IMR-90 (cell line): ENCODE measurements at regions of chr2 and their contacts with region 1.

Region 1: DNA sequence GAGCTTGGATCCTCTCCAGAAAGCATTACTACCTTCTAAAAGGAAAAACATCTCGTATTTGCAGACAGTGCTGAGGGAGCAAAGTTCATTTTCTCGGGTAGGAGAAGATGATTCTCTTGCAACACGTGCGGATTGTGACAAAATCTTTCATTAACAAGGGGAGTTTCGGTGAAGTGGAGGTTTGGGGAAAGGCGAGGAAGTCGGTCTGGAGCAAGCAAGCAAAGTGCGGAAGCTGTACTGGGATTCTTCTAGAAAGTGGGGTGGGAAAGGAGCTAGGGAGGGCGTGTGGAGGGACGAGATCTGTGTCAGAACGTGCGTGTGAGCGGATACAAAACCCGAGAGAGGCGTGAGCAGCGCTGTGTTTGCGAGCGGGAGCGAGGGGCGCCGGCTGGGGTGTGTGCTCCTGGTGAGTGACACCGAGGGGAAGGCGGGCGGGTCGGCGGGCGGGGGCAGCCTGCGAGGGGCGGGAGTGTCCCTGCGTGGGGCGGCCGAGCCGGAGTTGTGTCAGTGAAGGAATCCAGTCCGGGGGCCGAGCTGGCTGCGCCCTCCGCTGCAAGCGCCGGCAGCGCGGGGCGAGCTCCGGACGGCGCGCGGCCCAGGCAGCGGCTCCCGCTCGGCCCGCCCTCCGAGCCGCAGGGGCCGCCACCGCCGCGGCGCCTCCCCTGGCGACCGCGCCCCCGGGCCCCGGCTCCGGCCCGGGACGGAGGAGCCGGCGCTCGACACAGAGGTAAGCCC is at the start of gene SPATS2L:
- DNase-seq: peak; percentile 86
- ATAC-seq: peak; percentile 78
- H3K4me3 ChIP-seq: peak within 1 kb of the TSS; percentile 53
- H3K27ac ChIP-seq: peak within 1 kb of the TSS; percentile 87
- H3K4me1 ChIP-seq: peaks cover 16% of the 10 kb centered on the region; the same call in 1 of the 2 replicates
- H3K27me3 ChIP-seq: no peaks in the 10 kb centered on the region
- CTCF ChIP-seq: no peak
- POLR2A ChIP-seq: peak; percentile 68; the same call in 1 of the 2 replicates
- RAD21 ChIP-seq: no peak
- total RNA-seq, gene SPATS2L: 118 and 145 TPM in 2 replicates

Region 2: GRCh38 chr2:199979832-199980628 is 326.3 kb before region 1 on chr2:
- CTCF ChIA-PET with region 1: interaction called, 6 read pairs
- POLR2A ChIA-PET with region 1: no interaction called
- dilution Hi-C with region 1: no loop called
- in situ Hi-C with region 1: loop called (anchors 10 kb)
- intact Hi-C with region 1: loop called (anchors 1 kb)
- DNase-seq: peak; percentile 77
- ATAC-seq: peak; percentile 73
- H3K4me3 ChIP-seq: no peak overlapping the region
- H3K27ac ChIP-seq: peak overlapping the region; percentile 30
- H3K4me1 ChIP-seq: peaks cover 9% of the 10 kb centered on the region
- H3K27me3 ChIP-seq: no peaks in the 10 kb centered on the region
- CTCF ChIP-seq: peak; percentile 91
- POLR2A ChIP-seq: no peak
- RAD21 ChIP-seq: peak; percentile 87

Region 3: DNA sequence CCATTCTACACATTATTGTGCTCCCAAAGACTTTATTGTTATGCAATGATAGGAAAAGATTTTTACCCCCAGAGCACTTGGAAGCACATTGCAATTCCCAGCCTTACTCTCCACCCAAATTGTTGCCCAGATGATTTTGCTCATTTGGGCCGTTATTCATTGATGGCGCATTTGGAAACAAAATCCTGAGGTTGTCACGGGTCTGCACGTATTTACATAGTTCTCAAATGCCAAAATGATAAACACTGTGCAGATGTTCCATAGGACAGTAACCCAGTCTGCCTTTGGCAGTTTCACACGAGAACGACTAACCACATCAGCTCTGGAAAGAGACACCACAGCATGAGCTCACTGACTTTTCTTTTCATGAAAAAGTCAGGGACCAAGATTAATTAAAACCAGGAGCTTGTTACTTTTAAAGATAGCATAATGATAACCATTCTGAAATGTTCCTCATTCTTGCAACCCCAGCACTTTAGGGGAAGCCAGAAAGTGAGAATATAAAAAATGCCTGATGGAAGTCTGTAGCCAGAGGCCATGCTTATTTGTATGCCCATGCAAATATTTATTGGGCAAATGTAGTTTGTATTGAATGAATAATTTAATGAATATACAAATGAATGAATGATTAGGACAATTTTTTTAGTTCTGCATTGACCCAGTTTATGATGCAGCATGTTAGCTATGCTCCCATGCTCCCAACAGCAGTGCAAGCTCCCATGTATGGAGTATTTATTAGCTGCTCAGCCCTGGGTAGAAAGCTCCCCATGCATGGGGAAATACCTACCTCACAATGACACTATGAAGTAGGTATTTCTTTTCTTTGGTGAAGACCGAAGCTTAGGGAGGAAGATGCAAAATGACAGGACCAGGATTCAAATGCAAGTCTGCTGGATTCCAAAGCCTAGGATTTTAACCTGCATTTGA is 266.4 kb before region 1 on chr2:
- CTCF ChIA-PET with region 1: interaction called, 3 read pairs
- POLR2A ChIA-PET with region 1: no interaction called
- dilution Hi-C with region 1: no loop called
- in situ Hi-C with region 1: no loop called
- intact Hi-C with region 1: loop called (anchors 2 kb)
- DNase-seq: peak; percentile 99
- ATAC-seq: peak; percentile 83
- H3K4me3 ChIP-seq: no peak overlapping the region
- H3K27ac ChIP-seq: peak overlapping the region; percentile 86; the same call in 1 of the 2 replicates
- H3K4me1 ChIP-seq: peaks cover 23% of the 10 kb centered on the region
- H3K27me3 ChIP-seq: no peaks in the 10 kb centered on the region
- CTCF ChIP-seq: no peak
- POLR2A ChIP-seq: no peak
- RAD21 ChIP-seq: no peak

Region 4: GRCh38 chr2:200156166-200156835 is 150.1 kb before region 1 on chr2:
- CTCF ChIA-PET with region 1: interaction called, 3 read pairs
- POLR2A ChIA-PET with region 1: no interaction called
- dilution Hi-C with region 1: no loop called
- in situ Hi-C with region 1: no loop called
- intact Hi-C with region 1: loop called (anchors 5 kb)
- DNase-seq: peak; percentile 93
- ATAC-seq: peak; percentile 71
- H3K4me3 ChIP-seq: peak overlapping the region; percentile 39; the same call in 1 of the 2 replicates
- H3K27ac ChIP-seq: no peak overlapping the region
- H3K4me1 ChIP-seq: peaks cover 13% of the 10 kb centered on the region
- H3K27me3 ChIP-seq: no peaks in the 10 kb centered on the region
- CTCF ChIP-seq: no peak
- POLR2A ChIP-seq: no peak
- RAD21 ChIP-seq: no peak

Region 5: DNA sequence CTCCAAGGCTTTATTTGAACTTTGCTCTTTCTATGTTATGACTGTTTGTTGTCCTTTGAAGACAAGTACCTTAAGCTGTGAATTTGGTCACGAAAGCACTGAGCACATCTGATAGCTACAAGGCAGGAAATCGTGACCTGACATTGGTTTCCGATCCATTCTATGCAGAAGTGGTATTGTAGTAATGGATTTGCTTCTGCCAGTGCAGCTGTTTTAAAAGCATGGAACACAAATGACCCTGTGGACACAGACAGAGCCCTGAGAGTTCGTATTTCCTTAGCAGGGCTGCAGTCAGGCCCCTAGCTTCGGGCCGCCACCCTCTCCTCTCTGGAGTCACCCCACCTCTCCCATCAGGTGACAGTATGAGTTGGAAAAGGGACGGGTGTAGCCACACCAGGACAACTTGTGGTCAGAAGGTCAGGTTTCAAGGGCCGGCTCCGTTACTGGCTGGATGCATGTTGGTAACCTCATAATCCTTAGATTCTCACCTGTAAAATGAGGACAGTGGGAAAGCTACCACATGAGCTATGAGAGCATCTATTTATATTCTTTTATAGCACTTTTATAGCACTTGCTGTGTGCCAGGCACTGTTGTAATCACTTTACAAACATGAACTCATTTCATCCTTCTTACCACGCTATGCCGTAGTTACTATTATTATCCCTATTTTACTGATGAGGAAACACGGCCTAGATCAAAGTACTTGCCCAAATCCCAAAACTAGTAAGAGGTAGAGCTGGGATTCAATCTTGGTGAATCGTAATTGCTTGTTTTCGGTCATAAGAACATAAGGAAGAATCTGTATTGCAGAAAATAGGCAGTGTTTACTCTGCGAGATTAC is 70.4 kb after region 1 on chr2:
- CTCF ChIA-PET with region 1: no interaction called
- POLR2A ChIA-PET with region 1: no interaction called
- dilution Hi-C with region 1: no loop called
- in situ Hi-C with region 1: no loop called
- intact Hi-C with region 1: loop called (anchors 5 kb)
- DNase-seq: no peak
- ATAC-seq: no peak
- H3K4me3 ChIP-seq: no peak overlapping the region
- H3K27ac ChIP-seq: peak overlapping the region; percentile 54; the same call in 1 of the 2 replicates
- H3K4me1 ChIP-seq: peaks cover 42% of the 10 kb centered on the region
- H3K27me3 ChIP-seq: no peaks in the 10 kb centered on the region
- CTCF ChIP-seq: no peak
- POLR2A ChIP-seq: no peak
- RAD21 ChIP-seq: no peak

Region 6: DNA sequence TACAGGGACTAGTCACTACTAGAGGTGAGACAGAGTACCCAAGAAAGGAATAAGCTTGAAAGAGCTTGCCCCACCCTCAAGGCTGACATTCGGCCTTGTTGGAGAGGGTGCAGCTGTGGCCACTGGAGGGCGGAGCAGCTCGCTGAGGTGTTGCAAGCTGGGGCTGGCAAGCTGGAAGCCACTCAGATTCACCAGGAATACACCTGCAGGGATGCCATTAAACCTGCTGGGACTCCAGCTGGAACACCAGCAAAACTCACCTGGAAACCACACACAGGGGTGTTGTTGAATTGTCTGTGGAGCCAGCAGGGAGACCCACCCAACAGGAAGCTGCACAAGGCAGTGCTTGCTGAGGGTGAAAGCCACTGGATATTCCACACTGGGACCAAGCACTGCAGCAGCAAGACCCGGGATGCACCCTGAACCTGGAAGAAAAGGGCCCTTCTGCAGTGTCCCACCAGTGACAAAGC is 177.4 kb after region 1 on chr2:
- CTCF ChIA-PET with region 1: interaction called, 3 read pairs
- POLR2A ChIA-PET with region 1: no interaction called
- dilution Hi-C with region 1: no loop called
- in situ Hi-C with region 1: no loop called
- intact Hi-C with region 1: loop called (anchors 1 kb)
- DNase-seq: peak; percentile 25
- ATAC-seq: no peak
- H3K4me3 ChIP-seq: no peak overlapping the region
- H3K27ac ChIP-seq: no peak overlapping the region
- H3K4me1 ChIP-seq: peaks cover 19% of the 10 kb centered on the region
- H3K27me3 ChIP-seq: no peaks in the 10 kb centered on the region
- CTCF ChIP-seq: peak; percentile 25; the same call in 1 of the 2 replicates
- POLR2A ChIP-seq: no peak
- RAD21 ChIP-seq: no peak